Left colon (tissue), 2 donors: ENCODE measurements at regions of chr22 and their contacts with region 1.

Region 1: DNA sequence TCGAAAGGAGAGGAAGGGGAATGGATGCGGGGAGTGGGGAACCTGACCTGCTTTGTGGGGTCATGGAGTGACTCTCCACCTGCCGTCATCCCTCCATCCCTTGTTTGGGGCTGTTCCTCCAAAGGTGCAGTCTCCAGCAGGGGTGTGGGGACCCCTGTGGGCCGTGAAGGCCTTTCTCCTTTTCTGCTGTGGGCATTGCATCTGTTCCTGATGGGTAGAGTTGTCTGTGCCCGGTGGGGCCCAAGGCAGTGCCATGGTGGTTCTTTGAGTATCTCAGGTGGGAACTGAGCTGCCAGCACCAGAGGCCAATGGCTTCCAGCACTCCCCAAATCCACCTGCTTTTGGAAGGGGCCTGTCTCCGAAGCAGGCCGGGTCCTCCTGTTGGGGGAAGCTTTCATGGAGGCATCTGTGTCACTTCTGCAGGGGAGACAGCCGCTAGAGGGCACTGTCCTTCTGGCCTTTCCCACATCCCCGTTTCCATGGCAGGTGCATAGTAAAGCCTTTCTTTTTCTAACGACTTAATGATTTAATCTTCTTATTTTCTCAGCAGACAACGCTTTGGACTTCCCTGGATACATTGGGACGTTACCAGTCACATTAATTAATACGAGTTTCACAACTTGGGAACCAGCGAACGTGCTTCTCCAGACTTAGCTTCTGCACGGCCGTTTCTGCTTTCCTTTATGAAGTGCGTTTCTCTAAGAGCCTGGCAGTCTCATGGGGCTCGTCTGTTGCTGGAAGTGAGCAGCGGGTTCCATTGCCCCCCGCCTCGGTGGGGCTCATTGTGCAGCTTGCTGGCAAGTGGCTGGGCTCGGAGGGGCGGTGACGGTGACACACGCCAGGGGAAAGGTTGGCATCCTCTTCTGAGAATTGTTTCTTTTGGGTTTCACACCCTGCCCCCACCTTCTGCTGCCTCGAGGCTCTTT is 57.1 kb downstream of the PARVB start:
- DNase-seq: peak; percentile 58 to 90
- ATAC-seq: peak; percentile 53

Region 2: DNA sequence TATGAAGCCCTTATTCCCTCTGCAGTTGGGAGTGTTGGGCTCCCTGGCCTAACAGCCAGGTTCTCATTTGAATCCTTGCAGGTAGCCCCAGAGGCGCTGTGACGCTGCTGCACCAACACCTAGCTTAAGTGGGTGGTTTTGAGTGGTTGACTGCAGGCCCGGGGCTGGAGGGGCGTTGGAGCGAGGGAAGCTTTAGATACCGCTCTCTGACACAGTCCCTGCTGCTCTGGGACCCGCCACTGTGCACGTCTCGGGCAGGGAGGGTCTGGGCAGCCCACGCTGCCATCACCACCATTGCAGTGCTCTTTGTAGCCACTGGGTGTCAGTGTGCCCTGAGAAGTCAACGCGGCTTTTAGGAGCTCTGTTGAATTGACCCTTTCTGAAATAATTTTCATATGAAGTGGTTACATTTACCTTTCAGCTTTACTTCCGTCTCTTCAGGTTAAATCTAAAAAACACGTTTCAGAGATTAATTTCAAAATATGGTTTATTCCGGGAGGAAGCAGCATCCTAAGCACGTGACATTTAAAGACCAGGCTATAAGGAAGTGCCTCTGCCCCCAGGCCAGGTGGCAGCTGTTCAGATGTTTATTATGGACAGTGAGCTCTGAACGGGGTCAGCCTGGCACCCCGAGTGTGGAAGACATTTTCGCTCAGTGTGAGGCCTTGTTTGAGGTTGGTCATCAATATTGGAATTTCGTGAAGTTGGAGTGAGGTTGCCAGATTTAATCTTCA is 88.0 kb before region 1 on chr22:
- intact Hi-C with region 1: loop called in 1 of 2 experiments (anchors 10 kb)
- DNase-seq: peak in 1 of 2 donors; percentile 50
- ATAC-seq: peak; percentile 87

Region 3: DNA sequence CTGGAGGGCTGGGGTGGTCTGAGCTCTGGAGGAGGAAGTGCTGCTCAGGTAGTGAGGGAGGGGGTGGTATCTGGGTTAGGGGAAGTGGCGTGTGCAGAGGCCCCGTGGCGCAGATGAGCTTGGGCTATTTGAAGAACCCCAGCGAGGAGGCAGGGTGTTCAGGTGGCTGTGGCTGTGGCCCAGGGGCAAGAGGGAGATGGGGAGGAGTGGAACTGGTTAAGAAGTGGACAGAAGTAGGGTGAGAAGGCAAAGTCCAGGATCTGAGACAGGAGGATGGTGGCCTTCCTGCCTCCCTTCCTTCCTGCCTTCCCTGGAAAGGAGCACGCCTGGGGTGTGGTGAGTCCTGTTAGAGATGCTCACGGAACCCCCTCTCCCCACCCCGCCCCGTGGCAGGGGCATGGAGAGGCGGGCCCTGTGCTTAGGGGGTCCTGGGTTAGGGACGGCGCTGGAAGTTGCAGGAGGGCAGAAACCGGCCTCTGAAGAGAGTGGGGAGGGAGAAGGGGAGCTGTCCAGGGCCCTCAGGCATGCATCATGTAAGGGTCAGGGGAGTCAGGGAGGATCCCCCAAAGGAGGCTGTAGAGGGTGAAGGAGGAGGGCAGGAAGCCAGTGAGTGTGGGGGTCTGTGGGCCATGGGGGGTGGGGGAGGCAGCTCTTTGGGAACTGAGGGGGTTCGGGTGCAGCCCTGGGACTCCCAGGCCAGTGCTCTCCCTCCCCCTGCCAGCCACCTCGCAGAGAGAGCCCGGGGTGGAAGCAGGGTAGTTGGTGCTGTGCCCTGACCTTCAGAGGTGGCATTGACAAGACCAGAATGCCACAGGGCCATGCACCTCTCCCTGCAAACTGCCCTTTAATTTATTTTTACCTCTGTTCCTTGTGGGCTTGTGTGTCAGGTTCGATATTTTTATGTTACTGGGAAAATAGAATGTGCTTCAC is 35.8 kb after region 1 on chr22:
- intact Hi-C with region 1: no loop called
- DNase-seq: no peak
- ATAC-seq: no peak